Activated B cell treated with CpG ODN at 0.5 μM for 24 hours (primary cell): ENCODE measurements at regions of chr16 and their contacts with region 1.

Region 1: DNA sequence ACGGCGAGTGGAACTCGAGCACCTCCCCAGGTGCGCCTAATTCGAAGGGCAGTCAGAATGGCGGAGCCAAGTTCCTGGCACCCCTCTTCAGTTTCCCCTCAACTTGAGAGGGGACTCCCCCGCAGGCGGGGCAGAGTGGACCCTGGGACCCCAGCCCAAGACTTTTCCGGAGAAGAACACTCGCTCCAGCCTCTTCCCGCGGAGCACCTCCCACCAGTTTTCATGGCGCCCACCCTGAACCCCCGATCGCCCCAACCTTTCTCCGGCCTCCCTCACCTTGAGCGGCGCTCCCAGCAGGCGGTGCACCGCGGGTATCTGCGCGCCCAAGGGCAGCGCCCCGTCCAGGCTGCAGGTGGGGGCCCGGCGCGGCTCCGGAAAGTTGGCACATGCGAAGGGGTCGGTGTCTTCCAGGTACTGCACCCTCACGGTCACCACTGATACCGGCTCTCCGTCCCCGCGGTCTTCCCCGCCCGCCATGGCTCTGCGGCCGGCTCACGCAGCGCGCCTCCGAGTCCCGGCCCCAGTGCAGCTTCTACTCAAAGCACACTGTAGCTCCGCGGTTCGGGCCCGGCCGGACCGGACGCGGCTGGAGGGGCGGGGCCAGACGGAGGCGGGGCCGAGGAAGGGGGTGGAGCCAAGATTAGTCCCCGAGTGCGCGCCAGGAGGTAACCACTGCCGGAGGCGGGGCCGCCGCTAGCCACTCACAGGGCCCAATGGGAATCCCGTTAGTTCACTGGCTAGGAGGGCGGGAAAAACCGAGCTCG is at the start of gene FHOD1:
- DNase-seq: peak; percentile 100
- ATAC-seq: peak; percentile 70
- H3K4me3 Mint-ChIP-seq: peak within 1 kb of the TSS; percentile 85
- H3K27ac Mint-ChIP-seq: peak within 1 kb of the TSS; percentile 80
- H3K4me1 Mint-ChIP-seq: peaks cover 50% of the 10 kb centered on the region
- H3K27me3 Mint-ChIP-seq: peaks cover 2% of the 10 kb centered on the region
- CTCF ChIP-seq: no peak
- total RNA-seq, gene FHOD1: 45.5 and 50.4 TPM in 2 replicates

Region 2: GRCh38 chr16:66668777-66669444 is 578.2 kb before region 1 on chr16:
- CTCF ChIA-PET with region 1: no interaction called
- POLR2A ChIA-PET with region 1: no interaction called
- intact Hi-C with region 1: no loop called
- DNase-seq: no peak
- ATAC-seq: no peak
- H3K4me3 Mint-ChIP-seq: no peak overlapping the region
- H3K27ac Mint-ChIP-seq: no peak overlapping the region
- H3K4me1 Mint-ChIP-seq: no peaks in the 10 kb centered on the region
- H3K27me3 Mint-ChIP-seq: peaks cover 1% of the 10 kb centered on the region
- CTCF ChIP-seq: no peak

Region 3: DNA sequence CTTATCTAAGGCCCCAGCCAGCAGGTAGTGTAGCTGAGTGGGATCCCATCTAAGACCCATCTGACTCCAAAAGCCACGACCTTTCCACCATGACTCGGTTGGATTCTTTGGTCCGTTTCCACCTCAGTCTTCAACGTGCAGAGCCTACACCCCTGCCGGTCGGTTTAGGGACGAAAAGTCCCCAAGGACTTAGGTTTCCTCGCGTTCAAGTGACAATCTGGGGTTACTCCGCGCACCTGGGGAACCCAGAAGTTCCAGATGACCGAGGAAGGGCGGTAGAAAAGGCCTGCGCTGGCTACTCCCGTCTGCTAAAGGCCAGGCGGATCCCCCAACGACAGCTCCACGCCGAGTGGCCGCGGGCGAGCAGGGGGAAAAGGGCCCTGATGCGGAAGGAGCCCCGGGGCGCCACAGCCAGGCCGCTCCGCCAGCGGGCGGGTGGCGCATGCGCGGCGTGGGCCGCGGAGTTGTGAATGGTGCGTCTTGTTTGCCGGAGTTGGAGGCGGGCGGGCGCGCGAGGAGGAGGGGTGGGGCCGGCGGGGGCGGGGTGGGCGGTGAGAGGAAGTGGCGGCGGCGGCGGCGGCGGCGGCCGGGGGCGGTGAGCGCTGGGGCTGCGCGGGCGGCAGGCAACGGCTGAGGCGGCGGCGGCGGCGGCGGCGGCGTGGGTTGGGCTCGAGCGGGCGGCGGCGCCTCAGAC is 218.4 kb before region 1 on chr16 and contains the start of gene CBFB:
- CTCF ChIA-PET with region 1: no interaction called
- POLR2A ChIA-PET with region 1: interaction called, 5 read pairs
- intact Hi-C with region 1: loop called (anchors 2 kb)
- DNase-seq: peak; percentile 94
- ATAC-seq: peak; percentile 86
- H3K4me3 Mint-ChIP-seq: peak within 1 kb of the TSS; percentile 93
- H3K27ac Mint-ChIP-seq: peak within 1 kb of the TSS; percentile 96
- H3K4me1 Mint-ChIP-seq: peaks cover 40% of the 10 kb centered on the region
- H3K27me3 Mint-ChIP-seq: no peaks in the 10 kb centered on the region
- CTCF ChIP-seq: no peak
- total RNA-seq, gene CBFB: 66.6 and 67.3 TPM in 2 replicates

Region 4: GRCh38 chr16:67191995-67192681 is 55.0 kb before region 1 on chr16 and contains the start of gene E2F4:
- CTCF ChIA-PET with region 1: interaction called, 3 read pairs
- POLR2A ChIA-PET with region 1: interaction called, 5 read pairs
- intact Hi-C with region 1: loop called (anchors 2 kb)
- DNase-seq: peak; percentile 85
- ATAC-seq: peak; percentile 98
- H3K4me3 Mint-ChIP-seq: peak within 1 kb of the TSS; percentile 87
- H3K27ac Mint-ChIP-seq: peak within 1 kb of the TSS; percentile 70
- H3K4me1 Mint-ChIP-seq: peaks cover 32% of the 10 kb centered on the region
- H3K27me3 Mint-ChIP-seq: peaks cover 3% of the 10 kb centered on the region
- CTCF ChIP-seq: no peak
- total RNA-seq, gene E2F4: 117 and 128 TPM in 2 replicates

Region 5: DNA sequence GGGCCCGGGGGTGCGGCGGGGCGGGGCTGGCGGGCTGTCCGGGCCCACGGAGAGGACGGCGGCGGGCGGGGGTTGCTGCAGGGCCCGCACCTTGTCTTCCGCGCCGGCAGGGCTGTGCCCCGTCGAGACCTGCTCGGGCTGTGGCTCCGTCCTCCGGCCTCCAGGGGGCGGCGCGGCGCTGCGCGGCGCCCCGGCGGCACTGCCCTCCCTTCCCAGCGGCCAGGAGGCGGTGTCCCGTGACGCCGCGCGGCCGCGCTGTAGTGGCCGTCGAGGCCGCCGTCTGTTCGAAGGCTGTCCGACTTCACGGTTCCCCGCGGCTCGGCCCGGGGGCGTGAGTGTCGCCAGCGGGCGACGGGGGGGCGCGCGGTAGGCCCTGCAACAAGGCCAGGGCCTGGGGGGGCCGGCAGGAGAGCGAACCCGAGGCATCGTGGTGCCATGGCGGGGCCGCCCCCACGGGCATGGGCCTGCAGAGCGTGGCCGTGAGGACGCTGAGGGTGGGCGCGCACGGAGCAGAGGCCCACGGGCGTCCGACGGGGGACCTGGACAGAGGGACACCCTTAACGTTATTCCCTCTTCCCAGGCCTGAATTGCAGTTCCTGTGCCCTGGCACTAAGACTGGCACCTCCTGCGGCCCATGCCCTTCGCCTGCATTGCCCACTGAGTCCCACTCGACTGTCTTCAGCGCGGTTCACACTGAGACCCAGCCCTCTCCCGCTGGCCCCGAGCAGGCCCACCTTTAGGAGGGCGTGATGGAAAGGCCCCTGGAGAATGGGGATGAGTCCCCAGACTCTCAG is 32.4 kb after region 1 on chr16 and contains the start of gene PLEKHG4:
- CTCF ChIA-PET with region 1: interaction called, 4 read pairs
- POLR2A ChIA-PET with region 1: interaction called, 5 read pairs
- intact Hi-C with region 1: loop called (anchors 2 kb)
- DNase-seq: peak; percentile 73
- ATAC-seq: peak; percentile 97
- H3K4me3 Mint-ChIP-seq: peak within 1 kb of the TSS; percentile 79
- H3K27ac Mint-ChIP-seq: no peak within 1 kb of the TSS
- H3K4me1 Mint-ChIP-seq: peaks cover 3% of the 10 kb centered on the region
- H3K27me3 Mint-ChIP-seq: no peaks in the 10 kb centered on the region
- CTCF ChIP-seq: peak; percentile 41
- total RNA-seq, gene PLEKHG4: 7.8 TPM in 2 replicates

Region 6: DNA sequence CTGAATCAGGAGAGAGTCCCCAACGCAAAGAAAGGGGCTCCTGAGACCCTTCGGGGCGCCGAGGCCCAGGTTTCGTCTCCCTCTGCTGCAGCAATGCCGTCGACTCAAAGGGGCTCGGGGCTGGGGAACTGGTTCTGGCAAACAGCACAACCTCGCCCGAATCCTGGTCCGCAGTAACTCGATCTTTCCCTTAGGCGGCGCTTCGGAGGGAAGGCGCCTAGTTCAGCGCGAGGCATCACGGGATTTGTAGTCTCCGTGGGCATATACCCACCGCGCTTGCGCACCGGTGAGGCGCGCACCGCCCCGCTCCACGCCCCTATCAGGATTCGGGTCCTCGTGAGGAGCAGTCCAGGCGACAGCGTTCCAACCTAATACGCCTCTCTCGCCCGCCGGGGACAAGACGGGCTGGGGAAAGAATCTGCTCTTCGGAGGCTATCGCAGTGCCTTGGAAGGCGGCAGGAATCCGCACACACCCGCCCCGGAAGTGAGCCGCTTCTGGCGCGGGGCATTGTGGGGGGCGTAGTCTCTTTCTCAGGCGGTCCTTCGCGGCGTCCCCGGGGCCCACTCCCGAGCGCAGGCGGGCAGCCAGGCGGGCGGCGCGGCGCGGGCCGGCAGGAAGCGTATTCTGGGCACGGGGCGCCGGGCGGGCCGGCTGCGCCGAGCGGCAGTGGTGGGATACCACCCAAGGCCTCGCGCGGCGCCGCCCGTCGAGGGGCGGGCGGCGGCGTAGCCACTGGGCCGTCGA is 594.8 kb after region 1 on chr16 and contains the start of gene THAP11:
- CTCF ChIA-PET with region 1: no interaction called
- POLR2A ChIA-PET with region 1: no interaction called
- intact Hi-C with region 1: loop called (anchors 2 kb)
- DNase-seq: peak; percentile 95
- ATAC-seq: peak; percentile 54
- H3K4me3 Mint-ChIP-seq: peak within 1 kb of the TSS; percentile 95
- H3K27ac Mint-ChIP-seq: peak within 1 kb of the TSS; percentile 95
- H3K4me1 Mint-ChIP-seq: peaks cover 43% of the 10 kb centered on the region
- H3K27me3 Mint-ChIP-seq: no peaks in the 10 kb centered on the region
- CTCF ChIP-seq: peak; percentile 38
- total RNA-seq, gene THAP11: 24.2 and 24.9 TPM in 2 replicates